SK-N-SH (cell line): ENCODE measurements at regions of chr10 and their contacts with region 1.

Region 1: GRCh38 chr10:97072851-97073665 is 112.7 kb downstream of the SLIT1 start:
- DNase-seq: peak; percentile 87
- H3K4me3 ChIP-seq: no peak overlapping the region
- H3K27ac ChIP-seq: no peak overlapping the region
- H3K4me1 ChIP-seq: peaks cover 0 to 30% of the 10 kb centered on the region in 2 experiments; a peak in 1 of 4 replicates
- H3K27me3 ChIP-seq: peaks cover 17% of the 10 kb centered on the region
- CTCF ChIP-seq: peak; percentile 89
- EP300 ChIP-seq: no peak
- RAD21 ChIP-seq: peak; percentile 98

Region 2: GRCh38 chr10:97016728-97017473 is 56.2 kb before region 1 on chr10:
- CTCF ChIA-PET with region 1: no interaction called
- POLR2A ChIA-PET with region 1: no interaction called
- DNase-seq: no peak
- H3K4me3 ChIP-seq: no peak overlapping the region
- H3K27ac ChIP-seq: no peak overlapping the region
- H3K4me1 ChIP-seq: no peaks in the 10 kb centered on the region
- H3K27me3 ChIP-seq: no peaks in the 10 kb centered on the region
- CTCF ChIP-seq: no peak
- EP300 ChIP-seq: no peak
- RAD21 ChIP-seq: no peak

Region 3: DNA sequence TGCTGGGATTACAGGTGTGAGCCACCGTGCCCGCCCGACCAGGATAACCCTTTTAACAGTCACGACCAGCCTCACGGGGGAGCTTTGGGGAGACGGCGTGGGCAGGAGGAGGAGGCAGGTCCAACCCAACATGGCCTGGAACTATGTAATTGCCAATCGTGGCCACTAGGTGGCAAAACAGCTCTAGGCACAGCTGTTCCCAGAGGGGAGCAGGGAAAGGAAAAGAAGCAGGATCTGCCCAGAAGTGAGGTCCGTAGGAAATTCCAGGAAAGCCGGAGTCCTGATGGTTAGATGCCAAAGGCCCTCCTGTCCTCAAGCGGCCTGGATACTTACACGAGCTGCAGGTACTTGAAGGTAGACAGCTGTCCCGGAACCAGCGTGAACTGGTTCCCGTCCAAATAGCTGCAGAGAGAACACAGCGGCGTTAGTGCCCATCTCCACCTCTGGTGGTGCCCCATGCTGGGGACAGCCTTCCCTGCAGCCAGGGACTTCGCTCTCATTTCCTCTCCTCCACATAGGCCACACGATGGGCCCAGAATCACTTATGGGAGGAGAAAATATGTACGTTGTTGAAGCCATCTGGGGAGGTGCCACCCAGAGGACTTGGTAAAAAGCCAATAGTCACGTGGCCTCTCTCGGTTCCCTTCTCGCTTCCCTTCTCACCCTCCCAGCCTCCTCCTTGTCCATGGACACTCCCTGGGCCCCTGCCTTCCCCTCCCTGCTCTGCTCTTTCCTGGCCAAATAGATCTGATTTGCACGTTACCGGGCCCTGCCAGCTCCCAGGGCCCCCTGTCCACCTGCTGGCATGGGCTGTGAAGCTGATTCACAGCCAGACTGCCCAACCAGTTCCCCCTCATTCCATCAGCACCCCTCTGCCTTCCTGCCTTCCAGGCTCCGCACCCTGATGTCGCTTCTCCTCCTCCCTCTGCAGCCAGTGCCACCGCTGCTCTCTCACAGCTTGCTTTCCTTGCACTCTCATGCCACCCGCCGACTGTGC is 35.4 kb before region 1 on chr10:
- CTCF ChIA-PET with region 1: interaction called, 63 read pairs
- POLR2A ChIA-PET with region 1: interaction called, 4 read pairs
- DNase-seq: peak; percentile 89
- H3K4me3 ChIP-seq: peak overlapping the region in 1 of 2 experiments; percentile 20; a peak in 1 of 4 replicates
- H3K27ac ChIP-seq: no peak overlapping the region
- H3K4me1 ChIP-seq: peaks cover 0 to 4% of the 10 kb centered on the region in 2 experiments; a peak in 1 of 4 replicates
- H3K27me3 ChIP-seq: no peaks in the 10 kb centered on the region
- CTCF ChIP-seq: peak; percentile 81
- EP300 ChIP-seq: no peak
- RAD21 ChIP-seq: peak; percentile 87

Region 4: DNA sequence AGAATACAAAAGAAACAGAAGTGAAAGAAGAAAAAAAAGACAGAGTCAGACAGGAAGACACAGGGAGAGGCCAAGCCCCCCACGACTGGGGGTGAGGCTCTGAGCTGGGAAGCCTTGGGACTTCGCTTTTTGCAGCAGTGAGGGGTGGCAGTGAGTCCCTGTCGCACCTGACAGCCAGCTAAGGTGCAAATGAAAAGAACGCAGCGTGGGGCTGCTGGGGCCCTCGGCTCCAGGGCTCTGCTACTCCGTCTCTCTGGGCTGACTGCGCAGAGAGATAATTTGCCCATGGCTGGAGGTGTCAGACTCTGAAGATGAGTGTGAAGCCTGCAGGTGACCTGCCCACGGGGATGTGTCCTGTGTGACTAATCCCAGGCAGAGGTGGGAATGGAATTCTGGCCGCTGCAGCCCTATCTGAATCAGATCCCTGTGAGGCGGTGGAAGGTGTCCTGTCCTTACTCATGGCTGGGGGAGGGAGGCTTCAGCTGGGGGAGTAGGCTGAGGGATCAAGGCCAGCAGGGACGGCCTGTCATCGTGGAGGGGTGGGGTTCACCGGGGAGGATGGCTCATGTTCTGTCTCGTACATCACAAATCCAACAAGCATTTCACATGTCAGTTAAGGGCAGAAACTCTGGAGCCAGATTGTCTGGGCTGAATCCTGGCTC is 16.3 kb after region 1 on chr10:
- CTCF ChIA-PET with region 1: interaction called, 50 read pairs
- POLR2A ChIA-PET with region 1: no interaction called
- DNase-seq: no peak
- H3K4me3 ChIP-seq: no peak overlapping the region
- H3K27ac ChIP-seq: no peak overlapping the region
- H3K4me1 ChIP-seq: no peaks in the 10 kb centered on the region; a peak in 1 of 4 replicates
- H3K27me3 ChIP-seq: peaks cover 51% of the 10 kb centered on the region
- CTCF ChIP-seq: no peak
- EP300 ChIP-seq: no peak
- RAD21 ChIP-seq: no peak

Region 5: DNA sequence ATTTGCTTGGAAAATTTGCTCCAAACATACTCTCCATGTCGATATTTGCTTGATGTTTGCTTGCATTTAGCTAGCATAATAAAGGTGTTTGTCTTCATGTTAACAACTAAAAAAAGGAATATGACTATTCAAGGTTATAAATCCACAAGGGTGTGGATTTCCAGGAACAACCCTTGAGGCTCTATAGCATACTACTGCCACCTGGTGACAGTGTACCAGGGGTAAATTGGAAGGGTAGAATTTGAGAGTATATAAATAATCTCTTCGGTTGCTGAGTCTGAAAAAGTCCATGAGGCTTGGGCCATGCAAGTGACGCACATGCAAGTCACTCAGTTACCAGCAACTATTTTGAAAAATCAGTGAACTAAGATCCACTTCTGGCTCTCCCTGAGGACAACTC is 44.3 kb after region 1 on chr10:
- CTCF ChIA-PET with region 1: interaction called, 46 read pairs
- POLR2A ChIA-PET with region 1: no interaction called
- DNase-seq: no peak
- H3K4me3 ChIP-seq: no peak overlapping the region
- H3K27ac ChIP-seq: no peak overlapping the region
- H3K4me1 ChIP-seq: peaks cover 0 to 13% of the 10 kb centered on the region in 2 experiments; a peak in 1 of 4 replicates
- H3K27me3 ChIP-seq: peaks cover 3% of the 10 kb centered on the region; the same call in 1 of the 2 replicates
- CTCF ChIP-seq: no peak
- EP300 ChIP-seq: no peak
- RAD21 ChIP-seq: peak; percentile 37; the same call in 1 of the 2 replicates

Region 6: DNA sequence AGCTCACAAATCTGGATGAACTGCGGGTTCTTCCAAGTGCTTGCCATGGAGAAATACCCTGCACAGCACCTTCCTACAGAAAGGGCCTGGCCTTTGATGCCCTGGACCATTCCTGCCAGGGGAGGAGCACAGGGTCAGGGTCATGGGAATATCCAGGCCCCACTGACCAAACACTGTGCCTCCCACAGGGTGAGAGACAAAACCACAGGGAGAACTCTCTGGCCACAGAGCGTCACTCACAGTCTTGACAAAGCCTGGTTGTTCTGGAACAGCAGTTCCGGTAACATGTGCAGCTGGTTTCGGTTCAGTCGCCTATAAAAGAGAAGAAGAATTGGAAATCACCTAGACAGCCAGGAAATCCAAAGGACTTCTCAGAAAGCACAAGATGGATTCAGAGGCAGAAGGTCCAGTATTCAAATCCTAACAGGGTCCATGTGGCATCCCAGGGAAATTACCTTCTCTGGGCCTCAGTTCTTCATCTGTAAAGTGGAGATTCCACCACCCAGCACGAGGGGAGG is 84.6 kb after region 1 on chr10:
- CTCF ChIA-PET with region 1: interaction called, 11 read pairs
- POLR2A ChIA-PET with region 1: no interaction called
- DNase-seq: no peak
- H3K4me3 ChIP-seq: no peak overlapping the region
- H3K27ac ChIP-seq: no peak overlapping the region
- H3K4me1 ChIP-seq: peaks cover 0 to 20% of the 10 kb centered on the region in 2 experiments; a peak in 2 of 4 replicates
- H3K27me3 ChIP-seq: no peaks in the 10 kb centered on the region
- CTCF ChIP-seq: no peak
- EP300 ChIP-seq: no peak
- RAD21 ChIP-seq: no peak

Region 7: DNA sequence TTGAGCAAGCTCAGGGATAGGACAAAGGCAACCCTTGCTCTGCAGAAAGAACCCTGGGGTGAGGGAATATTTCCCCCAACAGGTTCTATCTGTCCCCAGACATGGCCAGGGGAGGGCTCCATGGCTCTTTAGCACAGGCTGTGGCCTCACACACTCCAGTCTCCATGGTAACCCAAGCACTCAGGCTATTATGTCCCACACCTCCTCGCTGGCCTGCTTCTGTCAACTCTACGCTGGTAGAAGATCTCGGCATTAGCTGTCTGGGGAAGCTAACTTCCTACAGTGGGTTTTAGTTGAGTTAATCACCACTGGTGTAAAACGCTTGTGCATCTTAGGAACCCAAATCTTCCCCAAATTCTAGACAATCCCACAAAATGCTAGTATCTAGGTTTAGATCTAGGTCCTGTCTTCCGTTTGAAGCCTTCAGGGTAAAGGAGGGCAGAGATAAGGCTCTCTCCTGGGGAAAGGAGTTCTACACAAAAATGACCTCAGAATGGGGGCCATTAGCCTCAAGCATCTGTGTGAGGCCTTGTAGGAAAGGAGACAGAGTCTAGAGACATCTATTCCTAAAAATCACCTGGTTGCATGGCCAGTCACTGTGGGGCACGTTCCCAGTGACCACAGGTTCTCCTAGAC is 149.4 kb after region 1 on chr10:
- CTCF ChIA-PET with region 1: interaction called, 89 read pairs
- POLR2A ChIA-PET with region 1: no interaction called
- DNase-seq: peak; percentile 46
- H3K4me3 ChIP-seq: no peak overlapping the region
- H3K27ac ChIP-seq: no peak overlapping the region
- H3K4me1 ChIP-seq: peaks cover 6 to 12% of the 10 kb centered on the region in 2 experiments; a peak in 3 of 4 replicates
- H3K27me3 ChIP-seq: no peaks in the 10 kb centered on the region
- CTCF ChIP-seq: no peak
- EP300 ChIP-seq: no peak
- RAD21 ChIP-seq: 0 out of 2 replicates have a peak, but pooled peaks have one; percentile 11